Ascending aorta (tissue), 2 donors: ENCODE measurements at regions of chr19 and their contacts with region 1.

Region 1: DNA sequence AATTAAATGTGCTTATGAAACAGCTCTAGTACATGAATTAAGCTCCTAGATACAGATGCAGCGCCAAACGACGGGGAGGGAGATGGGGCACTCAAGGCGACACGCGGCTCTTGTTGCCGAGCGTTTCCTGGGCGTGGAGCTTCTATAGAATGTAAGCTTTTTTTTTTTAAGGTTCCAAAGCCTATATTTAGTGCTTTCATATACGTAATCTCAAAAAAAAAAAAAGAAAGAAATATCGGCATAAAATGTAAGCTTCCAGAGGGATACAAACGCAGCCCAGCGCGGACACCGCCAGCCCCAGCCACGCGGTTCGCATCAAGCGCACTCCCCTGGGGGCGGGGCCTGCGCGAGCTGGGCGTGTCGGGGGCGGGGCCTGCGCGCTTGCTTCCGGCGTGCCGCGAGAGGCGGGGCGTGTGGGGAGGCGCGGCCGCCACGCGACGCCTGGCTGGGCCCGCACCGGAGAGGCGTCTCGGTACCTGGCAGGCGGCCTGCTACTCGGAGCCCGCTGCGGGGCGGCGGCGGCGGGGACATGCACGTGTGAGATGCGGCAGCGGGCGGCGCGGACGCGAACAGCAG is at the start of gene URI1:
- DNase-seq: peak; percentile 28 to 93
- H3K4me3 ChIP-seq: peak within 1 kb of the TSS; percentile 98 to 99
- H3K27ac ChIP-seq: peak within 1 kb of the TSS; percentile 77 to 78
- H3K4me1 ChIP-seq: peaks cover 0 to 18% of the 10 kb centered on the region in 2 donors
- H3K27me3 ChIP-seq: no peaks in the 10 kb centered on the region
- CTCF ChIP-seq: no peak
- total RNA-seq, gene URI1: 23.8 TPM

Region 2: DNA sequence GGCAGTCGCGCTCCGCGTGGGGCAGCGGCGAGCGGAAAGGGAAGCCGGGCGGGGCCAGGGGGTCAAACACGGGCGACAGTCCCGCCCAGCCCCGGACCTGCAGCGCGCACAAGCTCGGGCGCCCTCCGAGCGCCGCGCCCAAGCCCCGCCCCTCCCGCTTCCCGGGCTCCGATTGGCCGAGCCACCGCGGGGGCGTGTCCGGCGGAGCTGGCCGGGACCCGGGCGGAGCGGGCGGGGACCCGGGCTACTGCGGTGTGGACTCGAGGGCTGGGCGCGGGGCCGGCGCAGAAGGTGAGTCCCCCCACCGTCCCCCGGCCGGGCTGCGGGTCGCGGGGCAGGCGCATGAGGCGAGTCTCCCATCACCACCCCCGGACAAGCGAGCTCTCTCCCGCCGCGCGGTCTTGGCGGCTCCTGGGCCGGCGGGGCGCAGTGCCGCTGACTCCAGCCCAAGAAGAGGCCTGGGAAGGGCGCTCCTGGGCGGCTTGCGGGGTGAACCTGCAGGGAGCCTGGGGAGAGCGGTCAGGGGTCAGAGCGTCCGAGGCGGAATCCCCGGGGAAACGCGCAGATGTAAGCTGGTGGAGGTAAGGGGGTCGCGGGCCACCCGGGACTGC is 276.6 kb before region 1 on chr19 and contains the start of gene PLEKHF1:
- intact Hi-C with region 1: loop called (anchors 2 kb)
- DNase-seq: peak; percentile 72 to 95
- H3K4me3 ChIP-seq: peak within 1 kb of the TSS; percentile 75 to 93
- H3K27ac ChIP-seq: peak within 1 kb of the TSS; percentile 99
- H3K4me1 ChIP-seq: peaks cover 39 to 64% of the 10 kb centered on the region in 2 donors
- H3K27me3 ChIP-seq: no peaks in the 10 kb centered on the region
- CTCF ChIP-seq: no peak
- total RNA-seq, gene PLEKHF1: 68.3 TPM

Region 3: GRCh38 chr19:29811125-29812079 is 130.5 kb before region 1 on chr19 and contains the start of gene CCNE1:
- intact Hi-C with region 1: loop called (anchors 1 kb)
- DNase-seq: peak; percentile 55 to 95
- H3K4me3 ChIP-seq: peak within 1 kb of the TSS; percentile 75 to 79
- H3K27ac ChIP-seq: no peak within 1 kb of the TSS
- H3K4me1 ChIP-seq: no peaks in the 10 kb centered on the region
- H3K27me3 ChIP-seq: no peaks in the 10 kb centered on the region
- CTCF ChIP-seq: no peak
- total RNA-seq, gene CCNE1: not detected

Region 4: DNA sequence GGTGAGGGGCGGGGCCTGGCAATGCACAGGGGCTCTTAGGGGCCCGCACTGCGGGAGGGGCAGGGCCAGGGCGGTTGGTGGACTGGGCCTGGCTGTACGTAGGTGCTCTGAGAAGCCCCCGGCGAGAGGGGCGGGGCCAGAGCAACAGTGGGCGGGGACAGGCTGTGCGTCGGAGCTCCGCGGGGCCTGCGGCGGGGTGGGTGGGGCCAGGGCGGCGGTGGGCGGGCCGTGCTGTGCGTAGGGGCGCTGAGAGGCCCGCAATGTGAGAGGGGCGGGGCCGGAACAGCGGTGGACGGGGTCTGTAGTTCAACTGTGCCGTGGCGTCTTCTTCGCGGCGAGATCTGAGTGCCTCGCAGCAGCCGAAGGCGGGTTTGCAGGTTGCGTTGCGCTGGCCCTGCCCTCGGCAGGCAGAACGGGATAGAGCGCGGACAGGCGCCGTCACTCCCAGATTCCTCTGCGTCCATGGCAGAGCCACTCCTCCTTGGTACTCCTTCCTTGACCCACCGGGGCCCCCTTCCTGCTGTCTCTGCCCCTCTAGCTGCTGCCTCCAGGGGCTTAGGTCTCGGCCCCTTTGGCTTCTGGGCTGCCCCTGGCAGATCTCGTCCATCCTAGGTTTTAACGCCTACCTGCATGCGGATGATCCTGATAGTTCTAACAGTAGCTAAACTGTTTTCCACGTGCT is 96.9 kb before region 1 on chr19:
- intact Hi-C with region 1: loop called (anchors 2 kb)
- DNase-seq: peak; percentile 55 to 92
- H3K4me3 ChIP-seq: peak overlapping the region; percentile 66 to 88
- H3K27ac ChIP-seq: peak overlapping the region; percentile 27 to 74
- H3K4me1 ChIP-seq: peaks cover 5 to 9% of the 10 kb centered on the region in 2 donors
- H3K27me3 ChIP-seq: no peaks in the 10 kb centered on the region
- CTCF ChIP-seq: no peak

Region 5: GRCh38 chr19:31349160-31349881 is 1407.4 kb after region 1 on chr19 and contains the start of gene TSHZ3:
- intact Hi-C with region 1: loop called (anchors 10 kb)
- DNase-seq: peak in 1 of 2 donors; percentile 85
- H3K4me3 ChIP-seq: peak within 1 kb of the TSS; percentile 88 to 98
- H3K27ac ChIP-seq: peak within 1 kb of the TSS; percentile 75 to 90
- H3K4me1 ChIP-seq: peaks cover 7 to 13% of the 10 kb centered on the region in 2 donors
- H3K27me3 ChIP-seq: no peaks in the 10 kb centered on the region
- CTCF ChIP-seq: no peak
- total RNA-seq, gene TSHZ3: 9.9 TPM